GM18951 (cell line): ENCODE measurements at regions of chr2 and their contacts with region 1.

Region 1: GRCh38 chr2:39723946-39724827 is 54.9 kb downstream of the THUMPD2 start:
- POLR2A ChIP-seq: no peak

Region 2: DNA sequence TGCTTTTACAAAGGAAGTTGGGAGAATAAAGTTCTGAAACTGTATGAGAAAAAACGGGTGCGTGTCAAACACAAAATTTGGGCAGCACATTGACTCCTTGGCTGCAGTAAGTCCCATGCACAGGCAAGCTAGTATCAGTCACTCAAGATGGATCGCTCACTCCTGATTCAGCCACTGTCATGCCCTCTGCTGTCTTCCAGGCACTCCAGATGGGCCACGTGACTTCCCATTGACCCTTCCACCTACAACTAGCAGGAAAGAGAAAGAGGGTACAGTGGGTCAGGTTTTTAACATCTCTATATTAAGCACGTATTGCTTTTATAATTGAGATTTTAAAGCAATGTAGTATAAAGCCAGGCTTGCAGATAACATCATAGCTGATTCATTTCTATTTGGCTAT is 825.9 kb before region 1 on chr2:
- in situ Hi-C with region 1: no loop called
- POLR2A ChIP-seq: no peak

Region 3: DNA sequence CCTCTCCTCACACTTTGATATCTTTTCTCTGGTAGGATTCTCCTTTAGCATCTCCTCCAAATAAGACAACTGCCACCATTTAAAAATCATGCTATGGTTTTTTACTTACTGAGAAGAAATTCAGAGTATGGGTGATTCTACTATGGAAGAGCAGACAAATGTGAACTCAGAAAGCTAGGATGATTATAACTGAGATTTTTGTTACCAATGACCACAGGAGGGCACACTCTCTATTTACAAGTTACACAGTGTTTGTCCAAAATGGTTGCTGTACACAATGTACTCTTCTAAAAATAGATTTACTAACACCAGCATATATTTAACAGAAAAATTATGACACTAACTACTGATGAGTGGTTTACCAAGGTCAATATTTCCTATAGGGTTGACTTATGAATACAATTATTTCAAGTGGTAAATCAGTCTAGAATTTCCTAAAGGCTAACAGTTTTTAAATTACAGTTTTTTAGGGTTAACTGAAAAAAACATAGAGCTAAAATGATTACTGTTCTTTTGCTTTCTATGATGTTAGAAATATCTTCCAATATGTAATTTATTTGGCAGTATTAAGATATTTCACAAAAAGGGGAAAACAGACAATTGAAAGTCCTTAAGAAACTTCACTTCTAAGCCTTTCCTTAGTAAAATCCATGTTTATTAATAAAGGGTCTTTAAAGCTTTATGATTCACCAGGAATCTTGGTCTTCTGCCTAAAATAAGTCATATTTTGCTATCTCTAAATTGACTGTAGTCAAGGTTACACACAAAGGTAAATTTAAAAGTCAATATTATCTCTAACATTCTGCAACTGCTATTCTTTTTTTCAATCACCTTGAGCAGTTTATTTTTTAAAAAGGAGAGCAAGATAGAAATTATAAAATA is 344.3 kb before region 1 on chr2:
- in situ Hi-C with region 1: loop called (anchors 25 kb)
- POLR2A ChIP-seq: no peak

Region 4: DNA sequence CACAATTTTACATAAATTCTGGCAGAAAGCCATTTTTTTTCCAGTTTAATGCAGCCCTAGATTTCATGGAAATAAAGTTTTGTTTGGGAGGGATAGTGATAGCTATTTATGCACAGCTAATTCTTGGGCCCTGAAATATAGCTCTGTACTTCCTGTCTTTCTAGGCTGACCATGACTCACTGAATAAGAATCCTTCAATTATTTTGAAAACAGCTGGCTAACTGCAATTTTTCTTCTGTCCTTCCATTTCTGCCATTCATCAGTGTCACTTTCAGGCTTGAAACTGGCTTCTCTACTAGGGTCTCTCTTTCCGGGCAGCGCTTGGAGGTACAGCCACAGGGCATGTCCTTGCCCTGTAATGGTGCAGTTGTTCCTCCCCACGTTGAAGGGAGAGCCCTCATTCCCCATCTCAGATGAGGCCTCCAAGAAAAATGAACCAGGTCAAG is 155.6 kb before region 1 on chr2:
- in situ Hi-C with region 1: no loop called
- POLR2A ChIP-seq: no peak